ENCODE measurements at regions of chr20 and their contacts with region 1.

Region 1: GRCh38 chr20:63178889-63179686 is 36.8 kb downstream of the YTHDF1 start:
- DNase-seq: peak in 1 of 2 experiments; percentile 77
- H3K4me3 ChIP-seq: peak overlapping the region; percentile 29 to 83 (median 34); a peak in 7 of 8 replicates
- H3K27ac ChIP-seq: no peak overlapping the region
- H3K4me1 ChIP-seq: peaks cover 3 to 45% (median 25%) of the 10 kb centered on the region in 4 experiments
- H3K27me3 ChIP-seq: peaks cover 32 to 45% (median 40%) of the 10 kb centered on the region in 4 experiments
- CTCF ChIP-seq: peak in 2 of 3 experiments; percentile 21 to 40; a peak in 3 of 4 replicates
- EP300 ChIP-seq: no peak
- POLR2A ChIP-seq: no peak
- RAD21 ChIP-seq: peak in 1 of 2 experiments; percentile 37; a peak in 2 of 4 replicates

Region 2: DNA sequence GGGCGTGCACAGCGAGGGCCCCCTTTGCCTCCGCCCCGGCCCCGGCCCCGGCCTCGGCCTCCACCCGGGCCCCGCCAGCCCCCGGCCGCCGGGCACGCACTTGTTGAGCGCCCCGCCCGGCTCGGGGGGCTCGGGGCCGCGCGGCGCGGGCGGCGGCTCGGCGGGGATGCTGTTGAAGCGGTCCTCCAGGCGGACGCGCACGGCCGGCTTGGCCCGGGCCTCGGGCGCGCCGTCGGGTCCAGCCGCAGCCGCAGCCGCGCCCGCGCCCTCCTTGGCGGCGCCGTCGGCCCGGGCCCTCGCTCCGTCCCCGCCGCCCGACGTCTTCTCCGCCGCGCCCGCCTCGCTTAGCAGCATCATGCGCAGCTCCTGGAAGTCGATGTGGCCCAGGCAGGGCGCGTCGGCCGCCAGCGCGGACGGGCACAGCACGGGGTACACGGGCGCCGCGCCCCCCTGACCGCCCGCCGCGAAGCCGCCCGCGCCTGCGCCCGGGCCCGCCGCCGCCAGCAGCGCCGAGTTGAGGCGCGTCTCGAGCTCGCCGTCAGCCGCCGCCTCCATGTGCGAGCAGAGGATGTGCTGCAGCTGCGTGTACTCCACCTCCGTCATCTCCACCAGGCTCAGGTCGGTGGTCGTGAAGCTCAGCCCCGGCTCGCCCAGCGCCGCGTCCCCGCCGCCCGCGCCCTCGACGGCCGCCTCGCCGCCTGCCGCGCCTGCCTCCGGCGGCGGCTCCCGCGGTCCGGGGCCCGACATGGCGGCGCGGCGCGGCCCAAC is 318.0 kb before region 1 on chr20:
- CTCF ChIA-PET with region 1: no interaction called
- POLR2A ChIA-PET with region 1: no interaction called
- DNase-seq: peak in 1 of 2 experiments; percentile 64
- H3K4me3 ChIP-seq: peak overlapping the region; percentile 39 to 60 (median 52)
- H3K27ac ChIP-seq: peak overlapping the region; percentile 57; the same call in 1 of the 2 replicates
- H3K4me1 ChIP-seq: peaks cover 3 to 18% (median 13%) of the 10 kb centered on the region in 4 experiments
- H3K27me3 ChIP-seq: peaks cover 0 to 7% (median 4%) of the 10 kb centered on the region in 4 experiments; a peak in 5 of 7 replicates
- CTCF ChIP-seq: no peak
- EP300 ChIP-seq: no peak
- POLR2A ChIP-seq: no peak
- RAD21 ChIP-seq: no peak

Region 3: GRCh38 chr20:62953839-62954703 is 225.0 kb before region 1 on chr20:
- CTCF ChIA-PET with region 1: no interaction called
- POLR2A ChIA-PET with region 1: no interaction called
- DNase-seq: peak in 1 of 2 experiments; percentile 67
- H3K4me3 ChIP-seq: peak overlapping the region; percentile 1 to 61 (median 40); a peak in 6 of 8 replicates
- H3K27ac ChIP-seq: no peak overlapping the region
- H3K4me1 ChIP-seq: peaks cover 2 to 23% (median 17%) of the 10 kb centered on the region in 4 experiments
- H3K27me3 ChIP-seq: no peaks in the 10 kb centered on the region
- CTCF ChIP-seq: no peak
- EP300 ChIP-seq: no peak
- POLR2A ChIP-seq: no peak
- RAD21 ChIP-seq: no peak

Region 4: DNA sequence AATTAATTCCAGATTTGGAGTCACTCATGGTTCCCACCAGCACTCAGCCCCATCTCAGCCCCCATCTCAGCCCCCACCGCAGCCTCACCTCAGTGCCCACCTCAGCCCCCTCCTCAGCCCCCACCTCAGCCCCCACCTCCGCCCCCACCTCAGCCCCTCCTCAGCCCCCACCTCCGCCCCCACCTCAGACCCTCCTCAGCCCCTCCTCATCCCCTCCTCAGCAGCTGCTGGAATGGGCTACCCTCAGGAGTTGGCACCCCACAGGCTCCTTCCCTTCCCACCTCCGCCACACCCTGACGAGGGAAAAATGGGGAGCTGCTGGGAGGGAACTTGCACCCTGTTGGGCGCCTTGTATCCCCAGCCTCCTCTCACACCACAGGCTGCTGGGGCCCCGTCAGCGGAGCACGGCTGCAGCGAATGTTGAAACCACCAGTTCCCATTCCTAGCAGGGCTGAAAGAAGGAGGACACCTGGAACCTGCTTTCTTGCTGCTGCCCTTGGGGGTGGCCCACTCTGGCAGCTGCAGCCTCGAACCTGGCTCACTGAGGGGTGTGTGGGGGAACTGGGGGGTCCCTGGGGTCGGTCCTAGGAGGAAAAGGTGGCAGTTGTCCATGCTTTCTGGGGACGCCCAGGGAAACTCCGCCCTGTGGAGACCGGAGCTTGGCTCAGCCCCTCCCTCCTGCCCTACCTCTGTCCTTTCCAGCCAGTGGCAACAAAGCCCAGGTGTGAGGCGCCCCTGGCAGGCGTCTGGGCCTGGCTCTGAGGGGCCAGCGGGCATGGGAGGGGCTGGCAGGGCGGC is 11.5 kb before region 1 on chr20:
- CTCF ChIA-PET with region 1: interaction called, 13 read pairs
- POLR2A ChIA-PET with region 1: interaction called, 6 read pairs
- DNase-seq: no peak
- H3K4me3 ChIP-seq: peak overlapping the region in 3 of 4 experiments; percentile 19 to 47 (median 29); a peak in 4 of 8 replicates
- H3K27ac ChIP-seq: no peak overlapping the region
- H3K4me1 ChIP-seq: peaks cover 0 to 13% (median 7%) of the 10 kb centered on the region in 4 experiments; a peak in 5 of 7 replicates
- H3K27me3 ChIP-seq: peaks cover 0 to 6% (median 0%) of the 10 kb centered on the region in 4 experiments; a peak in 2 of 7 replicates
- CTCF ChIP-seq: no peak
- EP300 ChIP-seq: no peak
- POLR2A ChIP-seq: no peak
- RAD21 ChIP-seq: no peak; a peak in 1 of 4 replicates

Region 5: GRCh38 chr20:63196768-63197470 is 17.8 kb after region 1 on chr20:
- CTCF ChIA-PET with region 1: interaction called, 19 read pairs
- POLR2A ChIA-PET with region 1: interaction called, 7 read pairs
- DNase-seq: no peak
- H3K4me3 ChIP-seq: no peak overlapping the region
- H3K27ac ChIP-seq: no peak overlapping the region
- H3K4me1 ChIP-seq: peaks cover 0 to 2% (median 0%) of the 10 kb centered on the region in 4 experiments; a peak in 3 of 7 replicates
- H3K27me3 ChIP-seq: no peaks in the 10 kb centered on the region
- CTCF ChIP-seq: no peak
- EP300 ChIP-seq: no peak
- POLR2A ChIP-seq: no peak
- RAD21 ChIP-seq: no peak

Region 6: DNA sequence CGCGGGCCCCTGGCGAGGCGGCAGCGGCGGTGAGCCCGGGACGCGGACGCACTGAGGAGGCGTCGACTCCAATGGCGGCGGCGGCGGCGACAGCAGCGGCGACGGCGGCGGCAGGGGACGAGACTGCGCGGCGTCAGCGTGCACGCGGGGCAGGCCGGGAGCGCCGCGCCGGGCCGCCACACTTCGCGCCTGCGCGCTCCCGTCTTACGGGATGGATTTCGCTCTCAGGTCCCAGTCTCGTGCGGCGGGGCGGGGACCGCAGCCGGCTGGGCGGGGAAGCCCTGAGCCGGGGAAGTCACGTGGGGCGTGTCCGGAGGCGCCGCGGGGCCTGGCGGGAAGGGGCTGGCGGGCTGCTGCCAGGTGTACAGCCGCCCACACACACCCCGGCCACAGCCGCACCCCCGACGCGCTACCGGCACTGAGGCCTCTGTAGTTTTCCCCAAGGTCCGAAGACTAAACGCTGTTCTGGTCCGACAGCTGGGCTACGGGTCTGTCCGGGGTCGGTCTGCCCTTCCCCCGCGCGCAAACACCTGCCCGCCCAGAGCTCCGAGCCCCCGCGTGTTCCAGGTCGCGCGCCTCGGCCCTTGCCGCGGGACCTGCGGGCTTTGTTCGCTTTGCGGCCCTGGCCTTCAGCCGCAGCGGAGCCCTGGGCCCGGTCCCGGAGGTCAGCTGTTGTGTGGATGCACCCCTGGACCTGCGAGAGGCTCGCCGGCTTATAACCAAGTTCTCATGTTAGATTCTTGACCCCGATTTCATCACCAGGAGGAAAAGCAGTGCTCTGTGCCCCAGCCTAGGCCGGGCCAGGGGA is 37.2 kb after region 1 on chr20 and contains the start of gene YTHDF1:
- CTCF ChIA-PET with region 1: interaction called, 16 read pairs
- POLR2A ChIA-PET with region 1: interaction called, 12 read pairs
- DNase-seq: peak; percentile 70 to 96
- H3K4me3 ChIP-seq: peak within 1 kb of the TSS; percentile 69 to 92 (median 81)
- H3K27ac ChIP-seq: peak within 1 kb of the TSS; percentile 49; the same call in 1 of the 2 replicates
- H3K4me1 ChIP-seq: peaks cover 0 to 11% (median 2%) of the 10 kb centered on the region in 4 experiments; a peak in 4 of 7 replicates
- H3K27me3 ChIP-seq: peaks cover 0 to 3% (median 0%) of the 10 kb centered on the region in 4 experiments; a peak in 1 of 7 replicates
- CTCF ChIP-seq: no peak
- EP300 ChIP-seq: 0 out of 3 replicates have a peak, but pooled peaks of 1 of the 2 experiments have one; percentile 10
- POLR2A ChIP-seq: peak in 1 of 2 experiments; percentile 51; a peak in 1 of 3 replicates
- RAD21 ChIP-seq: no peak
- total RNA-seq, gene YTHDF1: 66.0 and 66.1 TPM in 2 replicates